ENCODE measurements at regions of chr12 and their contacts with region 1.

Region 1: DNA sequence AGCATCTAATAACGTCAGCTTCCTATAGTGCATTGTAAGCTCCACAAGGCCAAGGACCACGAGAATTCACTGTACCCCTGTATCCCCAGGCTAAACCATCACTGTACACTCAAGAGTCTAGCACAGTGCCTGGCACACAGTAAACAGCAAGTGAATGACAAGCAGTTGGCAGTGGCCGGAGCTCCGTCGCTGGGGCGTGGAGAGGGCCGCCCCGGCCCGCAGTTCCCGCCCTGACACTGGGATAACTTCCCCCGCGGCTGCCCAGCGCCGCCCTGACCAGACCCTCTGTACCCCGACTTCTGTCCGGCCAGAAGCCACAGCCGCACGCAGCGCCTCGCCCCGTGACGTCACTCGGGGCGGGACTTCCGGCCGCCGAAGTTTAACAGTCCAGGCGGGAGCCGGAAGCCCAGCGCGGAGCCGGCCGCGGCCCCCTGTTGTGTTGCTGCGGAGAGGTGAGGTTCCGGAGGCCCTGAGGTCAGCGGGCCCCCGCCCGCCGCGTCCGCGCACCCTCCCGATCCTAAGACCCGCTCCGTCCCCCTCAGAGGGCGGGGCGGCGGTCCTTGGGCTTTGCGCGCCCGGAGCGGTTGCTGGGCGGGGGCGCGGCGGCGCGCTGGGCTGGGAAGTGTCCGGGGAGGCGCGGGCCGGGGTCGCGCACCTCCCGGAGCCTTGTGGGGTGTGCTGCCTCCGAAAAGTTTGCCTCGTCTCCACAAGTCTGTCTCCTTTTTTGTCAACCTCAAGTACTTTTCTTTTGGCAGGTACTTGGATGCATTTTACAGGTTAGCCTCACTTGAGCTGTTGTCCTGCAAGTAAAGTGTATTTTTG is at the start of gene NEDD1:
- DNase-seq: peak; percentile 82
- H3K4me3 ChIP-seq: peak within 1 kb of the TSS; percentile 77 to 92 (median 90)
- H3K27ac ChIP-seq: peak within 1 kb of the TSS; percentile 49
- H3K4me1 ChIP-seq: peaks cover 19% of the 10 kb centered on the region
- H3K27me3 ChIP-seq: no peaks in the 10 kb centered on the region
- CTCF ChIP-seq: no peak
- POLR2A ChIP-seq: peak; percentile 86
- total RNA-seq, gene NEDD1: 25.4 and 26.8 TPM in 2 replicates

Region 2: DNA sequence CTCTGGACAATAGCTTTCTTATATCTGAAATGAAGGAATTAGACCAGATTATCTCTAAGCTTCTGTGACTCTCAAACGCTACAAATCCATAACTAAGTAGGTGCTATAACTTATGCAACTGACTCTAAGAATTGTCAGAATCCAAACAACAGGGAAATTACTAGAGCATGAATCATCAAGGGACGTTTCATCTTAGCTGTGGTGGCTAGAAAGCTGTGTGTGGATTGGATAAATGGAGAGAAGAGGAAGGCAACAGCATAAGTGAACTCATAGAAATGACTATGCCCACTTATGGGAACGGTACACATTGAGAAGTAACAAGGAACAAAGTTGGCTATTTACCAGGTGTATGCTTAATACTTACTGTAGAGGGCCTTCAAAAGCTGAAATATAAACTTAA is 96.0 kb before region 1 on chr12:
- CTCF ChIA-PET with region 1: interaction called, 3 read pairs
- POLR2A ChIA-PET with region 1: no interaction called
- dilution Hi-C with region 1: no loop called
- intact Hi-C with region 1: loop called (anchors 1 kb)
- DNase-seq: peak; percentile 94
- H3K4me3 ChIP-seq: no peak overlapping the region
- H3K27ac ChIP-seq: peak overlapping the region; percentile 93
- H3K4me1 ChIP-seq: peaks cover 37% of the 10 kb centered on the region
- H3K27me3 ChIP-seq: no peaks in the 10 kb centered on the region
- CTCF ChIP-seq: no peak
- POLR2A ChIP-seq: peak; percentile 17

Region 3: GRCh38 chr12:96886998-96887677 is 19.9 kb before region 1 on chr12:
- CTCF ChIA-PET with region 1: no interaction called
- POLR2A ChIA-PET with region 1: no interaction called
- dilution Hi-C with region 1: no loop called
- intact Hi-C with region 1: loop called (anchors 2 kb)
- DNase-seq: peak; percentile 26
- H3K4me3 ChIP-seq: no peak overlapping the region
- H3K27ac ChIP-seq: no peak overlapping the region
- H3K4me1 ChIP-seq: peaks cover 16% of the 10 kb centered on the region
- H3K27me3 ChIP-seq: no peaks in the 10 kb centered on the region
- CTCF ChIP-seq: no peak
- POLR2A ChIP-seq: no peak

Region 4: GRCh38 chr12:97048421-97049035 is 141.5 kb after region 1 on chr12:
- CTCF ChIA-PET with region 1: no interaction called
- POLR2A ChIA-PET with region 1: no interaction called
- dilution Hi-C with region 1: no loop called
- intact Hi-C with region 1: no loop called
- DNase-seq: no peak
- H3K4me3 ChIP-seq: no peak overlapping the region
- H3K27ac ChIP-seq: no peak overlapping the region
- H3K4me1 ChIP-seq: no peaks in the 10 kb centered on the region
- H3K27me3 ChIP-seq: peaks cover 2 to 3% of the 10 kb centered on the region in 2 experiments
- CTCF ChIP-seq: no peak
- POLR2A ChIP-seq: no peak